H1 (cell line): ENCODE measurements at regions of chr11 and their contacts with region 1.

Region 1: DNA sequence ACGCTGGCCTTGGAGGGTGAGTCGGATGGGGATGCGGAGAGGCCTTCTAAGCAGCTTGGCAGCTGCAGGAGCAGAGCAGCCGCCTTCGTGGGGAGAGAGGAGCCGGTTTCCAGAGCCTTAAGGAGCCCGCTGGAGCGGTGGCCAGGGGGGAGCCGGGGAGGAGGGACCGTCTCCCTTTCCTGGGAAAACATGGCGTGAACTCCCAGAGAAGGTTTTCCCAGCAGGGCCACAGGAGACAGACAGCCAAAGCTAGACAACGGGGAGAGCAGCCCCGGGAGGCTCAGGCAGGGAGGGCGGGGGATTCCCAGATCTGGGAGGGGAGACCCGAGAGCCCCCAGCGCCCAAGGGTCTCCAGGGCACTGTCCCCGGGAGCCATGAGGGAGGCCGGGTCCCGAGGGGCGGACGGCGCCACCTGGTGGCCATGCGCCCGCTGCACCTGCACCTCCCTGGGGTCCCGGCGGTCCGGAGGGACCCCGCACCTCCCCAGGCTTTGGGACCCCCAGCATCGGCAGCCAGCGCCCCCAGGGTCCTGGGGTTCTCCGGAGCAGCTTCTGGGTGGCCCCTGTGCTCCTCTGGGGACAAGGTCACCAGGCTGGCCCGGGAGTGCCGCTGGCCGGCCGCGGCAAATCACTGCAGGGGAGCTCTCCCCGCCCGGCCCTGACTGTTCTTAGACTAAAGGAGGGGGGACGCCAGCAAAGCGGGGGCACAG is 2.4 kb upstream of the SYT8 start:
- DNase-seq: peak in 1 of 2 experiments; percentile 92
- H3K4me3 ChIP-seq: peak overlapping the region; percentile 9 to 68 (median 44); a peak in 7 of 8 replicates
- H3K27ac ChIP-seq: no peak overlapping the region
- H3K4me1 ChIP-seq: peaks cover 0 to 4% (median 2%) of the 10 kb centered on the region in 4 experiments; a peak in 4 of 7 replicates
- H3K27me3 ChIP-seq: peaks cover 0 to 6% (median 1%) of the 10 kb centered on the region in 4 experiments; a peak in 3 of 7 replicates
- CTCF ChIP-seq: peak in 2 of 3 experiments; percentile 76 to 89; a peak in 3 of 4 replicates
- EP300 ChIP-seq: no peak
- POLR2A ChIP-seq: no peak
- RAD21 ChIP-seq: peak; percentile 67 to 79

Region 2: DNA sequence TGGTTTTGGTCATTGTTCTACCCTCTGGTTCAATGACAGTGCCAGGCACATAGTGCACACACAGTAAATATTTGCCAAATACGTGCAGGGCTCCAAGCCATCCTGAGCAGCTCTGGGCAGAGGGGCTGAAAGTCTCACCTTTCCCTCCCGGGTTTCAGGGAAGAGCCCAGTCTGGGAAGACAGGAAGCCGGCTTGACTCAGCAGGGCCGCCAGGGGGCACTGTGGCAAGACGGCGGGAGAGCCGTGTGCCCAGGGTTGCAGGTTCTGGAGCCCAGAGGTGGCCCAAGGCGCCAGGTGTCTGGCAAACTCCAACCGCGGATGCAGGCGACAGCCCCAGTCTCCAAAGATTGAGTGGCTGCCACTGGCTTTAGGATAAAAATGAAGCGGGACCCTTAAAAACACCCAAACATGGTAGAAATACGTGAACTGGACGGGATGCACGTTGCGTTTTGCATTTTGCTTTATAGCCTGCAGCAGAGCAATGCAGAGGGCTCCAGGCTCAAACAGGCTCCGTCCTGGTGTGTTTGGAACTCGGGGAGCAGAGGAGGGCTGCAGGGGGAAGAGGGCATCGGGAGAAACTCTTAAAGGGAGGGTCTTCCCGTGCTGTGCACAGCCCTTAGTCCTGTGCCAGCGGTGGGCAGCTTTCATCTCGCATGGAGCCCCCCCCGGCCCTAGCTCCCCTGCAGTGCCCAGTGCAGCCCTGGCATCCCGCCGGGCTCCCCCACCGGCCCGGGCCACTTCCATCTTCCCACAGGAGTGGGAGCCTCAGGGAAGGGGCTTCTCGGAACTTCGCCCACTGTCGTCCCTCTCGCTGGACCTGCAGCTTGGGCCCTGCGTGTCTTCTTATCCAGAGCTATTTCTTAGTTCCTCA is 192.1 kb before region 1 on chr11:
- CTCF ChIA-PET with region 1: interaction called, 13 read pairs
- POLR2A ChIA-PET with region 1: no interaction called
- DNase-seq: peak; percentile 58 to 87
- H3K4me3 ChIP-seq: no peak overlapping the region
- H3K27ac ChIP-seq: no peak overlapping the region
- H3K4me1 ChIP-seq: no peaks in the 10 kb centered on the region; a peak in 1 of 7 replicates
- H3K27me3 ChIP-seq: no peaks in the 10 kb centered on the region; a peak in 1 of 7 replicates
- CTCF ChIP-seq: peak; percentile 86 to 92 (median 89)
- EP300 ChIP-seq: no peak
- POLR2A ChIP-seq: no peak
- RAD21 ChIP-seq: peak; percentile 42 to 60; a peak in 3 of 4 replicates

Region 3: DNA sequence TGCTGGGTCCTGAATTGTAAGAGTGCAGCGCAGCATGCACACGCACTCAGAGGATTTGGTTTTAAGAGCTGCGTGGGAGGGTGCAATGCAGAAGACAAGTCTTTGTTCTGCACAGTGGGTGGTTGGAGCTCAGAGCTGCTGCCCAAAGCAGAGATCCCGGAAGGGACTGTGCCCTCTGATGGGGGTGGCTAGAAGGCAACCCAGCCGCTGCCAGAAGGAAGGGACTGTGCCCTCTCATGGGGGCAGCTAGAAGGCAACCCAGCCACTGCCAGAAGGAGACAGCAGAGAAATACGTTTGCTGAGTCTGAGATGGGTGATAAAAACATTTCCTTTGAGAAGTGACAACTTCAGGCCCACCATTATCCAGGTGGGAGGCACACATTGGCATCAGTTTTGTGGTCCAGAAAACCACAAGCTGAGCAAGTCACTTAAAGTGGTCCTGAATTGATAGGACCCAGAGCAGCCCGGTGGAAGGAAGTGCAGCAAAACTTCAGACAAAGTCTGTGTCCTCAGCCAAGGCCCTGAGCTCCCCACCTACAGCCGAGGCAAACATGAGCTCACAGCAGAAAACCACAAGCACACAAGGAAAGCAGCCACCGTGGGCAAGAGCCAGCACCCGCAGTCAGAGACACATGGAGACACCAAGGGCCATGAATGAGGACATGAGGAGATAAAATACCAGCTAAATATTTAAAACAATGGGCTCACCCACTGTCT is 131.1 kb before region 1 on chr11:
- CTCF ChIA-PET with region 1: interaction called, 20 read pairs
- POLR2A ChIA-PET with region 1: no interaction called
- DNase-seq: no peak
- H3K4me3 ChIP-seq: no peak overlapping the region
- H3K27ac ChIP-seq: no peak overlapping the region
- H3K4me1 ChIP-seq: peaks cover 0 to 5% (median 3%) of the 10 kb centered on the region in 4 experiments; a peak in 2 of 7 replicates
- H3K27me3 ChIP-seq: no peaks in the 10 kb centered on the region
- CTCF ChIP-seq: peak in 2 of 3 experiments; percentile 8 to 17; a peak in 1 of 4 replicates
- EP300 ChIP-seq: no peak
- POLR2A ChIP-seq: no peak
- RAD21 ChIP-seq: no peak

Region 4: DNA sequence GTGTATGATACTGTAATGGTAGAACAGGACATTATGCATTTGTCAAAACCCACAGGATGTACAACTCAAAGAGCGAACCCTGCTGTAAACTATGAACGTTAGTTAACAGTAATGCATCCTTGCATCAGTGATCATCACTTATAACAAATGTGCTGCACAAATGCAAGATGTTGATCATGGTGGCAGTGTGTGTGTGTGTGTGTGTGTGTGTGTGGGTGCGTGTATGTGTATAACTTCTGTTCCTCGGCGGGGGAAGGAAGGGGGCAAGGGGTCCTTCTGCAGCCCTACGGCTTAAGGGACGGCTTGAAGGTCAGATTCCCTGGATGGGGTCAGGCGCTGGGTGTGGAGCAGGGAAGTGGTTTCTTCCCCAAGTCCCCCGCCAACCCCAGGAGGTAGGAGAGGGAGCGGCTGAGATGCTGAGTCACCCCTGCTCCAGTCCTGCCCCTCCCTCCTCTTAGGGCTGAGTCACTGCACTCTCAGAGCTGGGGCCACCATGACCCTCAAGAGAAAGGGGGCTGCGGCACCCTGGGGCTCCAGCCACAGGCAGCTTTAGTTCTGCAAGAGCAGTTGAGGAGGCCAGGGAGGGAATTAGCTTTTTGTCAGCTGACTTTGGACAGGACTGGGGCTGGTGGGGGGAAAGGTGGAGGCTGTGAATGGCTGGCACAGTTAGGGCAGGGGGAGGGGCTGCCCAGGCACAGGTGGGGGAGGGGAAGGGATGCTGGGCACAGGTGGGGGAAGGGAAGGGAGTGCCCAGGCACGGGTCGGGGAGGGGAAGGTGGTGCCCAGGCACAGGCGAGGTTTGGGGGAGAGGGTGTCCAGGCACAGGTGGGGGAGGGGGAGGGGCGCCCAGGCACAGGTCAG is 59.9 kb before region 1 on chr11:
- CTCF ChIA-PET with region 1: interaction called, 13 read pairs
- POLR2A ChIA-PET with region 1: no interaction called
- DNase-seq: peak in 1 of 2 experiments; percentile 71
- H3K4me3 ChIP-seq: peak overlapping the region in 2 of 4 experiments; percentile 7 to 30; a peak in 1 of 8 replicates
- H3K27ac ChIP-seq: peak overlapping the region; percentile 12; the same call in 1 of the 2 replicates
- H3K4me1 ChIP-seq: peaks cover 5 to 15% (median 11%) of the 10 kb centered on the region in 4 experiments
- H3K27me3 ChIP-seq: no peaks in the 10 kb centered on the region
- CTCF ChIP-seq: no peak
- EP300 ChIP-seq: no peak
- POLR2A ChIP-seq: no peak
- RAD21 ChIP-seq: no peak

Region 5: DNA sequence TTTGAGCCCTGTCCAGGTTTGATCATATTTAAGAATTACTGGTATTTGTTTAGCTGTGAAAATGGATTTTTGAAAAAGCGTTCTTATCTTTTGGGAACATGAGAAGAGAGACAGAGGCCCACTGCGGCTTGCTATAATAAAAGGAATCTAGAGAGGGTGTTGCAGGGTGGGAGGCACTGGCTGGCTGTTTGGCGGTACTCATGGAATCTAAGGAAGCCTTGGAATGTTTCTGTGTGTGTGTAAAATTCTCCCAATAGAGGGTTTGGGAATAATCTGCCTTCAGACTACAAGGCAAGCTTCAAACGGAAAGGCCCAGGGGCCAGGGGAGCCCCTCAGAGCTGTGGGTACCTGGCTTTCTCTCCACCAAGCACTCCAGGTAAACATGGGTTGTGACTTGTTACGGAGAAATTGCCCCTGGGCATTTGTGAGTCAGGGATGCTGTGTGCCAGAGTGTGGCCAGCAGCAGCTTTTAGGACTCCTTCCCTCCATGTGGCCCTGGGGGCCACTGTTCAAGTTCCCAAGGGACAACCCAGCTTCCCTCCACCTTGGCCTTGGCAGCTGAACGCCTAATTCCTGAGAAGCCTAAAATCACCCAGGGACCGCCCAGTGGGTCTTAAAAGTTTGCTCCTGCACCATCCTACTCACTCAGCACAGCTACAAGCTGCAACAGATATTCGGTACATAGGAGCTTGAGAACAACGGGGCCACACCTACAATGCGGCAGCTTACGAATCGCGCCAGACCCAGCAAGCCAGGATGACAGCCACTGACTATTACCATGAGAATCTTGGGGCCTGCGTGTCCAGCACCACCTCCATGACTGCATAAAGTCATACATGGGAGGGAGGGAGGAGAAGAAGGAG is 11.7 kb before region 1 on chr11:
- CTCF ChIA-PET with region 1: interaction called, 44 read pairs
- POLR2A ChIA-PET with region 1: interaction called, 4 read pairs
- DNase-seq: no peak
- H3K4me3 ChIP-seq: no peak overlapping the region
- H3K27ac ChIP-seq: no peak overlapping the region
- H3K4me1 ChIP-seq: peaks cover 0 to 2% (median 0%) of the 10 kb centered on the region in 4 experiments; a peak in 3 of 7 replicates
- H3K27me3 ChIP-seq: no peaks in the 10 kb centered on the region; a peak in 1 of 7 replicates
- CTCF ChIP-seq: no peak
- EP300 ChIP-seq: no peak
- POLR2A ChIP-seq: no peak
- RAD21 ChIP-seq: no peak

Region 6: GRCh38 chr11:1870721-1871466 is 38.5 kb after region 1 on chr11:
- CTCF ChIA-PET with region 1: interaction called, 24 read pairs
- POLR2A ChIA-PET with region 1: interaction called, 3 read pairs
- DNase-seq: no peak
- H3K4me3 ChIP-seq: no peak overlapping the region
- H3K27ac ChIP-seq: no peak overlapping the region
- H3K4me1 ChIP-seq: no peaks in the 10 kb centered on the region
- H3K27me3 ChIP-seq: peaks cover 0 to 3% (median 0%) of the 10 kb centered on the region in 4 experiments; a peak in 1 of 7 replicates
- CTCF ChIP-seq: no peak
- EP300 ChIP-seq: no peak
- POLR2A ChIP-seq: no peak
- RAD21 ChIP-seq: no peak

Region 7: DNA sequence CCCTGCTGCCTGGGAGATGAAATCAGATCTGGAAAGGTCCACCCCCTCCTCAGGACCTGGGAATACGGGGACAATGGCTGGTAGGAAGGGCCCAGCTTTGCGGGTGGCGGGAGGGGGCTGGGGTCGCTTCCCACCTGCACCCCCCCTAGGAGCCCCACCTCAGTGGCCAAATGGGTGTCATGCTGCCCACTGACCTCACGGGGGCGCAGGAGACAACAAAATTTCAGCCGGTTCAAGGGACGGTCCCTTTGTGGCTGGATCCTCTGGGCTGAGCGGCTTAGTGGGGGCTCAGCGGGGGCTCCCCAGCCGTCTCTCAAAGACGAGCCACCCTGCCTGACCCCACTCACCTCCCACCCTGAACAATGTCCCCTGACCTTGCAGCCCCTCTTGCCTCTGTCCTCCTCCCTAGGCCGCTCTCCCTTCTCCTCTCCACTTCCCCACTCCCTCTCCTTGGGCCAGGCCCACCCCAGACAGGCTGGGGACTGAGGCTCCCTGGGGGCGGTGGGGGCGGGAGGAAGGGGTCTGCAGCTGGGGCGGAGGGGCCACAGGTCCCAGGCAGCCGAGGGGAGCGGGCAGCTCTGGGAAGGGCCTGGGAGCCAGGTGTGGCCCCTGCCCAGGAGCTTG is 204.6 kb after region 1 on chr11:
- CTCF ChIA-PET with region 1: interaction called, 18 read pairs
- POLR2A ChIA-PET with region 1: no interaction called
- DNase-seq: no peak
- H3K4me3 ChIP-seq: no peak overlapping the region
- H3K27ac ChIP-seq: no peak overlapping the region
- H3K4me1 ChIP-seq: no peaks in the 10 kb centered on the region
- H3K27me3 ChIP-seq: no peaks in the 10 kb centered on the region
- CTCF ChIP-seq: no peak
- EP300 ChIP-seq: no peak
- POLR2A ChIP-seq: no peak
- RAD21 ChIP-seq: no peak

Region 8: GRCh38 chr11:2217211-2218030 is 385.1 kb after region 1 on chr11:
- CTCF ChIA-PET with region 1: no interaction called
- POLR2A ChIA-PET with region 1: no interaction called
- DNase-seq: no peak
- H3K4me3 ChIP-seq: no peak overlapping the region
- H3K27ac ChIP-seq: no peak overlapping the region
- H3K4me1 ChIP-seq: peaks cover 5 to 14% (median 12%) of the 10 kb centered on the region in 4 experiments
- H3K27me3 ChIP-seq: peaks cover 0 to 31% (median 8%) of the 10 kb centered on the region in 4 experiments; a peak in 5 of 7 replicates
- CTCF ChIP-seq: no peak
- EP300 ChIP-seq: no peak
- POLR2A ChIP-seq: no peak
- RAD21 ChIP-seq: no peak